ENCODE measurements at regions of chr11 and their contacts with region 1.

Region 1: GRCh38 chr11:111230122-111230465 is 15.4 kb upstream of the POU2AF2 start:
- DNase-seq: no peak
- H3K4me3 ChIP-seq: peak overlapping the region; percentile 73; the same call in 1 of the 2 replicates
- H3K27ac ChIP-seq: no peak overlapping the region
- H3K4me1 ChIP-seq: no peaks in the 10 kb centered on the region
- H3K27me3 ChIP-seq: no peaks in the 10 kb centered on the region

Region 2: DNA sequence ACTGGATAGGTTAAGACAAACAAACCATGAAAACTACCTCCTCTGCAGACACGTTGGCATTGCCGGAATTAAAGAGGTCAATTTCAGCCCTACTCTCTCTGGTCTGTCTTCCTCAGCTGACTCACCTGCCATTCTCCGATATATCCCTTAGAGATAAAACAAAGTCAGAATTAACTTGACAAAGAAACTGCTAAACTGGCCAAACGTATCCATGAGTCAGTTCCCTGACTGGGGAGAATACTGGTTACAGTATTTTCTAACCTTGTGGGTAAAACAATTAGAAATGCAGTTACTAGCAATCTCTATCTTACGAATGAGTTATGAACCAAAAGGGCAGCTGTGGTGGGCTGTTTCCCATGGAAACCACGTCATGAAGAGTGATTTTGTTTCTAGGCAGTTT is 1029.9 kb before region 1 on chr11:
- in situ Hi-C with region 1: loop called (anchors 25 kb)
- DNase-seq: peak; percentile 54
- H3K4me3 ChIP-seq: no peak overlapping the region
- H3K27ac ChIP-seq: no peak overlapping the region
- H3K4me1 ChIP-seq: peaks cover 35% of the 10 kb centered on the region
- H3K27me3 ChIP-seq: no peaks in the 10 kb centered on the region

Region 3: DNA sequence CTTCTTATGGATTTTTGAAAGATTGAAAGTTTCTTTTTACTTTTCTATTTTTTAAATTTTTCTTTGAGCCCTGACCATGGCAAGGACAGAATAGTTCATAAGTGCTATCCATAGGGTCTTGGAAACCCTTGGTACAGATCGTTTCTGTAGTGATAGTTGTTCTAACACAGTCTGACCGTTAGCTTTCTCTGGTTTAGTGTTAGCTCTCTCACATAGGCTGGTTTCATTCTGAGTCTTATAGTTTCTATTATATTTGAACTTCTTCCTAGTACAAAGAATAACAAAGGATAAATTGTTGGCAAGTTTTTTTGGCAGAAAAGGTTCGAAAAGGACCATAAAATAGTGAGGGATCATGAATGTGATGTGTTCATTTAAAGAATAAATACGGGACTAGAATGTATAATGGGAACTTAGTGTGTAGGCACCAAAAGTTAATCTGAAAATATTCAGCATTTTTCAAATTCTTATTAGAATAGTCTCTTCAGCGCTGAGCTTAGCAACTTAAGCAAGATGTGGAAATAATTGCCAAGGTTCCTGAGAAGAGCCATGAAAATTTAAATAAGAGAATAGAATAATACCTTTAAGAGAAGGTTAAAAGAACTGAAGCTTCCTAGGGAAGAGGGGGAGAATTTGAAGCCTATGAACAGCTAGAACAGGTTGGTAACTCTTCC is 776.3 kb before region 1 on chr11:
- in situ Hi-C with region 1: loop called (anchors 10 kb)
- DNase-seq: peak; percentile 36
- H3K4me3 ChIP-seq: no peak overlapping the region
- H3K27ac ChIP-seq: no peak overlapping the region
- H3K4me1 ChIP-seq: no peaks in the 10 kb centered on the region
- H3K27me3 ChIP-seq: no peaks in the 10 kb centered on the region

Region 4: DNA sequence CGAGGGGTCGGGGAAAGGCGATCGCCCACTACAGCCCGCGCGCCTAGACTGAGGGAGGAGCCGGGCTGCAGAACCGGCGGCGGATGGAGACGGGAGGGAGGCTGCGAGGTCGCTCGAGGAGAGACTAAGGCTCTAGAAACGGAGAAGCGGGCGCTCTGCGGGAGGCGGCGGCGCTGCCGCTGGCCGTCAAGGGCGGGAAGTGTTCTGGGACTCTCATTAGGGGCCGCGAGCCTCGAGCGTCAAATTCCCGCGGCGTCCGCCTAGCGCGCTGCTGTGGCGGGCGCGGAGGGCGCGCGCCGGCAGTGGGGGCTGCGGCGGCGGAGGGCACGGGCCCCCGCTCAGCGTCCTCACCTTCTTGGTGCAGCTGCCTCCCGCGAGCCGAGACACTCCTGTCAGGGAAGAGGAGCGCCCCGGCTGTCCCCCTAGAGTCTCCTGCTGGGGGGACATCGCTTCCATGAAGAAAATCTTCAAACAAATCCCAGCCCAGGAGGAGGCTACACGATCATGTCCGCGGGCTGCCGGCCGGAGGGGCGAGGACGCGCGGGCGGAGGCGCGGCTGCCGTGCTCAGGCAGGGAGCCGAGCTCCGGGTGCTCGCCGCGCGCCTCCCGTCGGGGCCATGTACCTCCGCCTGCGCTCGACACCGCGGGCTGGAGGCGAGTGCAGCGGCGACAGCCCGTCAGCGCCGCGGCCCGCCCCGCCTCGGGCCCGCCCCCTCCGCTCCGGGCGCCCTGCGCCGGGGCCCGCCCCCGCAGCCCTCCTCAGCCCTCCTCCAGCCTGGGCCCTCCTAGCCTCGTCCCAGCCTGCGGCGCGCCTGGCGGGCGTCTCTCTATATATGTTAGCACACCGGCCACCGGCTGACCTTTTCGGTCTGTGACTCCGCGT is 518.1 kb before region 1 on chr11 and contains the start of gene ARHGAP20:
- in situ Hi-C with region 1: loop called (anchors 25 kb)
- DNase-seq: peak; percentile 87
- H3K4me3 ChIP-seq: peak within 1 kb of the TSS; percentile 78
- H3K27ac ChIP-seq: no peak within 1 kb of the TSS
- H3K4me1 ChIP-seq: peaks cover 22% of the 10 kb centered on the region
- H3K27me3 ChIP-seq: no peaks in the 10 kb centered on the region
- total RNA-seq, gene ARHGAP20: 0.76 and 0.97 TPM in 2 replicates